ENCODE measurements at regions of chr9 and their contacts with region 1.

Region 1: GRCh38 chr9:128521956-128522355 is 17.4 kb downstream of the GLE1 start:
- DNase-seq: no peak
- ATAC-seq: no peak
- H3K4me3 ChIP-seq: no peak overlapping the region
- H3K27ac ChIP-seq: no peak overlapping the region
- H3K4me1 ChIP-seq: no peaks in the 10 kb centered on the region
- H3K27me3 ChIP-seq: no peaks in the 10 kb centered on the region
- CTCF ChIP-seq: no peak

Region 2: DNA sequence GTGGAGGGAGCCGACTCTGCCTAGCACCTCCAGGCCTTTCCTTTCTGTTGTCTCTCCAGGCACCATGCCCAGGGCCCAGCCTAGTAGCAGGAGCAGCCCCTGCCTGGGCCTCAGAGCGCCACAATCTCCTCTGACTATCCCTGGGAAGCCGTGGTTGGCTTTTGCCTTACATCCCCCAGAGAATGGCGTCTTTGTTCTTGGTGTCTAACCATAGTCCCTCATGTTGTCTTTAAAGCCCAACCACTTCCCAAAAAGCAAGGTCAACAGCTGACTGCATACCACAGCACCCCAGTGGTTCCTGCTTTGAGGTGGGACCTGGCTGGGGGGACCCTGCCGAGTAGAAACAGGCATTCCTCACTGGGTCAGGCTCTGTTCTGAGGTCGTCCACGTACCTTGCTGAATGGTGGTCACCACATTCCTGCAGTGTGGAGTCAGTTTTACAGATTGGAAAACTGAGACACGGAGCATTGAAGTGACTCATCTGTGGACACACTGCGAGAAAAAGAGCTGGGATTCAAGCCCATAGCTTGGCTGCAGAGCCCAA is 115.0 kb before region 1 on chr9:
- CTCF ChIA-PET with region 1: no interaction called
- POLR2A ChIA-PET with region 1: no interaction called
- in situ Hi-C with region 1: no loop called
- intact Hi-C with region 1: no loop called
- DNase-seq: no peak
- ATAC-seq: no peak
- H3K4me3 ChIP-seq: no peak overlapping the region
- H3K27ac ChIP-seq: no peak overlapping the region
- H3K4me1 ChIP-seq: peaks cover 9% of the 10 kb centered on the region; the same call in 1 of the 2 replicates
- H3K27me3 ChIP-seq: no peaks in the 10 kb centered on the region
- CTCF ChIP-seq: no peak

Region 3: GRCh38 chr9:128484686-128485413 is 37.1 kb before region 1 on chr9:
- CTCF ChIA-PET with region 1: no interaction called
- POLR2A ChIA-PET with region 1: no interaction called
- in situ Hi-C with region 1: no loop called
- intact Hi-C with region 1: no loop called
- DNase-seq: no peak
- ATAC-seq: no peak
- H3K4me3 ChIP-seq: no peak overlapping the region
- H3K27ac ChIP-seq: no peak overlapping the region
- H3K4me1 ChIP-seq: no peaks in the 10 kb centered on the region
- H3K27me3 ChIP-seq: no peaks in the 10 kb centered on the region
- CTCF ChIP-seq: no peak

Region 4: GRCh38 chr9:128504485-128505413 is 17.2 kb before region 1 on chr9 and contains the start of gene GLE1:
- CTCF ChIA-PET with region 1: no interaction called
- POLR2A ChIA-PET with region 1: interaction called, 22 read pairs
- in situ Hi-C with region 1: no loop called
- intact Hi-C with region 1: no loop called
- DNase-seq: peak; percentile 35
- ATAC-seq: peak; percentile 96
- H3K4me3 ChIP-seq: peak within 1 kb of the TSS; percentile 90 to 91
- H3K27ac ChIP-seq: peak within 1 kb of the TSS; percentile 90
- H3K4me1 ChIP-seq: peaks cover 7% of the 10 kb centered on the region
- H3K27me3 ChIP-seq: no peaks in the 10 kb centered on the region
- CTCF ChIP-seq: no peak
- total RNA-seq, gene GLE1: 25.9 TPM